Transverse colon (tissue), 4 donors: ENCODE measurements at regions of chr2 and their contacts with region 1.

Region 1: DNA sequence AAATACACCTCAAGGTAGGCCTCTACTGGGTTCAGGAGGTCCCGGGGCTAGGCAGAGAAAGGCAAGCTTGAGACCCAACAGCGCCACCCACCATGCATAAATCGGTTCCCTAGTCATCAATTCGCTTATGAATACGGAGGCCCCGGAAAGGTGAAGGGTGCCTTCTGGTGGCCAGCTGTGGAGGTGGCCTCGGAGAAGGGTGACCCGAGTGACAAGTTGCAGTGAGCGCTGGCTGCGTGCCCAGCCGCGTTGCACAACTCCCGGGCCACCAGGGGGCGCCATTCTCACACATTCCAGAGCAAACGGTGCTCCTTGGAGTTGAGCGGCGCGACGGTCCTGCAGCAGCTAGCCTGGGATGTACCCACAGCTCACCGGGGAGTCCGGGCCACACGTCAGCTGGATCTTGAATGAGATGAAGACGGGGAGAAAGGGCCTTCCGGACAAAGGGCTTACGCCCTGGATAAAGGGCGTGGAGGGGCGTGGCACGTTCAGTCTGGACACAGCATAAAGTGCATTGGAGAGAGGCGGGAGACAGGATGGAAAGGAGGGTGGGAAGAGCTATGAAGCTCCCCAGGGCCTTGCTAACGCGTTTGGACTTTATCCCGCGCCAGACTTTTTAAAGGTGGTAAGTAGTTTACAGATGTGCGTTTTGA is 20.4 kb downstream of the TMSB10 start:
- DNase-seq: peak; percentile 99
- H3K4me3 ChIP-seq: peak overlapping the region in 3 of 4 donors; percentile 14 to 46 (median 37)
- H3K27ac ChIP-seq: peak overlapping the region; percentile 36 to 73 (median 70)
- H3K4me1 ChIP-seq: peaks cover 5 to 37% (median 20%) of the 10 kb centered on the region in 4 donors
- H3K27me3 ChIP-seq: no peaks in the 10 kb centered on the region
- CTCF ChIP-seq: peak; percentile 97 to 100 (median 99)
- EP300 ChIP-seq: no peak
- POLR2A ChIP-seq: peak; percentile 20

Region 2: DNA sequence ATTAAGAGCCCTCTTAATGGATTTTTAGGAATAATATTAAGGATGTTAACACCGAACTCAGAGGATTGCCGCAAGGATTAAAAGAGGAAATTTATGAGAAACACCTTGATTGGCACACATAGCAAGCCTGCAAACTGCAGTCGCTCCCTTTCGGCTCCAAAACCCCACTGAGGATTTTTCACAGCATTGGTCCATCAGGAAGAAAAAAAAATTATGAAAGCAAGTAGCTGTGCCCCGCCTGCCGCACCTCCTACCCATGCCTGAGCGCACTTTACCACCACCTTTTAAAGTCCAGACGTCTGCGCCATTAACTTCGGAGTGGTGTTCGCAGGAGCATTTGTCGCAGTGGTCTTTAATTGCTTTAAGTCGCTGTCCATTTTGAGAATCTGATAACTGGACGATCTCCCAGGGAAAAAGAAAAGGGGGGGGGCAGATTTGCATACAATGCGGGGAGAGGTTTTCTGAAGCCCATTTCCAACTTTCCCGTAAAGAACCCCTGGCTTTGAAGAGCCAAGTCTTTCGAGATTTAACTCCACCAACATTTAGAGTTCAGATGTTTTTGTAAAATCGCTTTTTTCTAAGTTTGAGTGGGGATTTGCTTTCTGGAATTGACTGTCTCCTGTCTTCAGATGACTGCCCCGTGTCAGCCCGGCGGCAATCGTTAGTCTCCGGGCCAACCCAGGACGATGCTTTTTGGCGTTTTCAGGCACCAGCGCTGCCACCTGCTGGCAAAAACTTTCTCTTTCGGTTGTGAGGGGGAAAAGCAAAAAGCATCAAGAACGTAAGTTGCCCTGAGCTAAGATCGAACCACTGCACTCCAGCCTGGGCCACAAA is 44.1 kb before region 1 on chr2:
- in situ Hi-C with region 1: no loop called
- intact Hi-C with region 1: loop called (anchors 2 kb)
- DNase-seq: peak; percentile 92
- H3K4me3 ChIP-seq: peak overlapping the region; percentile 45 to 75 (median 65)
- H3K27ac ChIP-seq: peak overlapping the region; percentile 76 to 92 (median 86)
- H3K4me1 ChIP-seq: peaks cover 0 to 25% (median 14%) of the 10 kb centered on the region in 4 donors
- H3K27me3 ChIP-seq: peaks cover 15% of the 10 kb centered on the region
- CTCF ChIP-seq: peak; percentile 65 to 85 (median 72)
- EP300 ChIP-seq: no peak
- POLR2A ChIP-seq: peak; percentile 40

Region 3: GRCh38 chr2:85011747-85012146 is 85.9 kb after region 1 on chr2:
- in situ Hi-C with region 1: loop called in 1 of 4 experiments (anchors 5 kb)
- intact Hi-C with region 1: no loop called
- DNase-seq: no peak
- H3K4me3 ChIP-seq: no peak overlapping the region
- H3K27ac ChIP-seq: no peak overlapping the region
- H3K4me1 ChIP-seq: peaks cover 9 to 49% (median 21%) of the 10 kb centered on the region in 4 donors
- H3K27me3 ChIP-seq: no peaks in the 10 kb centered on the region
- CTCF ChIP-seq: no peak
- EP300 ChIP-seq: no peak
- POLR2A ChIP-seq: no peak

Region 4: DNA sequence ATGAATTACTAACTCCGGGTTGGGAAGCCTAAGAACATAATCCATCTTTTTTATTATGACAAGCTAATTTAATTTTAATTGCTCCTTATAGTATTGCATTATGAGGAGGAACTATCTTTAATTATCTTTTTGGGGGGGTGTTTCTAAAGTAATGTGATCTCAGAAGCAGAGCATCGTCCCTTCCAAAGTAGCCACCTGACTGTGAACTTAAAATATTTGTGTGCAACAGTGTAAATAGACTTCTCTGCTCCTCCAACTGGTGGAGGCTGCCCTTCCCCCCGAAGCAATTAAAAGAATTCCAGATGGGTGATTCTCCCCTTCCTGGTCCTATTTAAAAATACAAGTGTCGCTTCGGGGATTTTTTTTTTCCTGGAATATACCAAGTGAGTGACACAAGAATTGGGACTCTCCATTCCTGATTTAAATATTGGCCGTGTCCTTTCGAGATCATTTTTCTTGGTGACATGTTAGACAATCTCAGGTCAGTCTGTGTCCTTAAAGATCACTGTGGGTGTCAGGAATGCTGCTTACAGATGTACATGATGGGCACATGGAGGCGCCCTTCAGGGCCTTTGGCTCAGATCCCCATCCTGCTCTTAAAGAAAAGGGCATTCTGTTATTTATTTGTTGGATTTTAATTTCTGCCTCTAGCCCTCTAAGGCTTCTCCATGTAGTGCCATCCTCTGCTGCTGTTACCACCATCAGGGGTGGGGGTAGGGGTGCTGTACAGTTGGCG is 263.2 kb after region 1 on chr2:
- in situ Hi-C with region 1: no loop called
- intact Hi-C with region 1: no loop called
- DNase-seq: no peak
- H3K4me3 ChIP-seq: no peak overlapping the region
- H3K27ac ChIP-seq: no peak overlapping the region
- H3K4me1 ChIP-seq: peaks cover 0 to 4% (median 2%) of the 10 kb centered on the region in 4 donors
- H3K27me3 ChIP-seq: no peaks in the 10 kb centered on the region
- CTCF ChIP-seq: no peak
- EP300 ChIP-seq: no peak
- POLR2A ChIP-seq: no peak

Region 5: DNA sequence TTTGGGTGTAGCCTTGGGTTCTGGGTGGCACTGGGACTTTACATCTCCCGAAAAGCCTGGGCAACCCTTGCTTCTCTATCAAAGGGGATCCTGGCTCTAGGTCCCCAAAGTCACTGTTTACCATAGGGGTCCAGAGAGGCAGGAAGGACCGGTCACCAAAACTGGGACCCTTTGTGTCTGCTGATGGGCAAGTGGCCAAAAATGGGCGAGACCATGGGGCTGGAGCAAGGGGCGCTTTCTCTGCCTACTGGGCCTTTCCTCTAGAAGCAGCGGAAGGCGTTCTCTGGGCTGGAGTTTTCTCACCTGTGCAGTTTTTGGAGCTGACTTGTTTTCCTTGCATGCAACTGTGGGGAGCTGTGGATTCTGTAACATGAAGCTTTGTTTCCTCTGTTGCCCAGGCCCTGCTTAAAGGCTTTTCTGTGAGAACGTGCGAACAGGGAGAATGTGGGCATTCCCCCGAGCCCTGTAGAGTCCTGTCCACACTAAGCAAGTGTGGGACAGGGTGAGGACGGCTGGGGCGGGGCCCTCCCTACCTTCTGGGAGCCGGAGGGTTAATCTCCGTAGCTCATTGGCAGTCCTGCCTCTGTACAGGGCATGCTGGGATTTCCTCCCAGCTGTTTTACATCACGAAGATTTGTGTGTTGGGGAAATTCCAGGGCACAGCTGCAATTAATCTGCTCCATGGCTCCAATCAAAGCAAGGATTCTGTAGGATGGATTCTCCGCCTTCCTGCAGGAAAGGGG is 351.7 kb after region 1 on chr2:
- in situ Hi-C with region 1: loop called in 1 of 4 experiments (anchors 25 kb)
- intact Hi-C with region 1: no loop called
- DNase-seq: no peak
- H3K4me3 ChIP-seq: no peak overlapping the region
- H3K27ac ChIP-seq: peak overlapping the region; percentile 30 to 70 (median 57)
- H3K4me1 ChIP-seq: peaks cover 0 to 31% (median 11%) of the 10 kb centered on the region in 4 donors
- H3K27me3 ChIP-seq: no peaks in the 10 kb centered on the region
- CTCF ChIP-seq: no peak
- EP300 ChIP-seq: no peak
- POLR2A ChIP-seq: no peak